PC-9 (cell line): ENCODE measurements at regions of chr19 and their contacts with region 1.

Region 1: GRCh38 chr19:35716801-35717666 is 769 bp upstream of the KMT2B start:
- DNase-seq: peak; percentile 83 to 89
- H3K4me3 ChIP-seq: peak overlapping the region; percentile 85
- H3K27ac ChIP-seq: peak overlapping the region; percentile 45
- H3K4me1 ChIP-seq: peaks cover 20% of the 10 kb centered on the region
- H3K27me3 ChIP-seq: no peaks in the 10 kb centered on the region
- CTCF ChIP-seq: peak; percentile 91

Region 2: DNA sequence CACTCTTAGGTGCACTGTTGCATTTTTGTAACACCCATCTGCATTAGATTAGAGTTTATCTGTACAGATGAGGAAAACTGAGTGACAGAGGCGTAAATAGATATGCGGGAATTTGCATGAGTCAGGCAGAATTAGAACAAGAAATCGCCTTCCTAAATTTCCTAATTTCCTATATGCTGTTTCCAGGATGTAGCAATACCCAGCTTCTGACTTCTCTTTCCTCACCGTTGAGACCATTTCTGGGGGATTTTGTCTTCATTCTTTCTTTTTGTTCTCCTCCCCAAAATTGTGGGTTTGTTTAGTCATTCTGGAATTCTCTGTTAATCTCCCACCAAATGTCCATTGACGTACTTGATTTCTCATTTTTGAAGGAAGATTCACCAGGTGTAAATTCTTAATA is 742.4 kb before region 1 on chr19:
- CTCF ChIA-PET with region 1: no interaction called
- POLR2A ChIA-PET with region 1: no interaction called
- intact Hi-C with region 1: loop called (anchors 2 kb)
- DNase-seq: no peak
- H3K4me3 ChIP-seq: no peak overlapping the region
- H3K27ac ChIP-seq: no peak overlapping the region
- H3K4me1 ChIP-seq: no peaks in the 10 kb centered on the region
- H3K27me3 ChIP-seq: peaks cover 44% of the 10 kb centered on the region
- CTCF ChIP-seq: no peak

Region 3: GRCh38 chr19:35269421-35270117 is 447.5 kb before region 1 on chr19:
- CTCF ChIA-PET with region 1: no interaction called
- POLR2A ChIA-PET with region 1: no interaction called
- intact Hi-C with region 1: loop called (anchors 1 kb)
- DNase-seq: peak; percentile 68 to 93
- H3K4me3 ChIP-seq: peak overlapping the region; percentile 66
- H3K27ac ChIP-seq: peak overlapping the region; percentile 47; the same call in 1 of the 2 replicates
- H3K4me1 ChIP-seq: peaks cover 14% of the 10 kb centered on the region; the same call in 1 of the 2 replicates
- H3K27me3 ChIP-seq: no peaks in the 10 kb centered on the region
- CTCF ChIP-seq: peak; percentile 70

Region 4: GRCh38 chr19:35352448-35353304 is 364.4 kb before region 1 on chr19:
- CTCF ChIA-PET with region 1: interaction called, 3 read pairs
- POLR2A ChIA-PET with region 1: no interaction called
- intact Hi-C with region 1: loop called (anchors 1 kb)
- DNase-seq: peak; percentile 66 to 71
- H3K4me3 ChIP-seq: no peak overlapping the region
- H3K27ac ChIP-seq: no peak overlapping the region
- H3K4me1 ChIP-seq: no peaks in the 10 kb centered on the region
- H3K27me3 ChIP-seq: no peaks in the 10 kb centered on the region
- CTCF ChIP-seq: peak; percentile 93

Region 5: GRCh38 chr19:35545001-35545911 is 171.8 kb before region 1 on chr19 and contains the start of gene TMEM147:
- CTCF ChIA-PET with region 1: no interaction called
- POLR2A ChIA-PET with region 1: no interaction called
- intact Hi-C with region 1: loop called (anchors 1 kb)
- DNase-seq: peak; percentile 66 to 90
- H3K4me3 ChIP-seq: peak within 1 kb of the TSS; percentile 100
- H3K27ac ChIP-seq: peak within 1 kb of the TSS; percentile 59
- H3K4me1 ChIP-seq: peaks cover 14% of the 10 kb centered on the region
- H3K27me3 ChIP-seq: no peaks in the 10 kb centered on the region
- CTCF ChIP-seq: no peak
- total RNA-seq, gene TMEM147: 82.6 and 95.9 TPM in 2 replicates

Region 6: DNA sequence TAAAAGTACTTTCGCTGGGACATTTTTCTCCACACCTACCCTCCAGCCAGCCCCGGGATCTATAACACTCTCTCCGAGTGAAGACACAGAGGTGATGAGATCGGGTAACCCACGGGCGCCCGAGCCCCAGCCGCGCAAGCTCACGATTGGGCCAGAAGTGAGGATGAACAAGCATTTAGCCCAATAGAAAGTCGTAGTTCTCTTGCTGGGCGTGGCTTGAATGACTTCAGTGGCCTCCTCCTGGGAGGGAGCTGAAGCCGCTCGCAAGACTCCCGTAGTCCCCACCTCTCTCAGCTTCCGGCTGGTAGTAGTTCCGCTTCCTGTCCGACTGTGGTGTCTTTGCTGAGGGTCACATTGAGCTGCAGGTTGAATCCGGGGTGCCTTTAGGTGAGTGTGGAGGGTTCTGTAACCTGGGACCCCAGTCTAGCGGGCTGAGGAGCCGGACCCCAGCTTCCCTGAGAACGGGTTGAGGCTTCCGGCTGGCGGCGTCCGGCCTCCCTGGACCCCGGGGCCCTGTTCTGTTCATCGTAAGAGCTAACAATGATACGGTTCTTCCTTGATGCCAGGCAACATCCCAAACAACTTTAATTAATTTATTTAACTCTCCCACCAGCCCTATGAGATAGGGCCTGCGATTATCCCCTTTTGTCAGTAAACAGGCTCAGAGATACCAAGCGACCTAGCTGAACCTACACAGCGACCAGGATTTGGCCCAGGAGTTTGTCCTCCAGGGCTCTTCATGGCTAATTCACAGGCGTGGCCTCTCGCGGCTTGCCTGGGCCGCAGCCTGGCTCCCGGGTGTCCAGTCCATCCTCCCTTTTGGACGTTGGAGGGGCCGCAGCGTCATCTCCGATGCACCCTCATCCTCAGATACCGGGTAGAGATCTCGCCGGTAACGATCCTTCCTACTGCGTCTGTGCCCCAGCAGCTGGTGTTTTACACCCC is 68.7 kb before region 1 on chr19 and contains the start of gene COX6B1:
- CTCF ChIA-PET with region 1: no interaction called
- POLR2A ChIA-PET with region 1: no interaction called
- intact Hi-C with region 1: loop called (anchors 1 kb)
- DNase-seq: peak; percentile 91 to 96
- H3K4me3 ChIP-seq: peak within 1 kb of the TSS; percentile 78
- H3K27ac ChIP-seq: peak within 1 kb of the TSS; percentile 2; the same call in 1 of the 2 replicates
- H3K4me1 ChIP-seq: peaks cover 11% of the 10 kb centered on the region; the same call in 1 of the 2 replicates
- H3K27me3 ChIP-seq: no peaks in the 10 kb centered on the region
- CTCF ChIP-seq: no peak
- total RNA-seq, gene COX6B1: 441 and 489 TPM in 2 replicates

Region 7: DNA sequence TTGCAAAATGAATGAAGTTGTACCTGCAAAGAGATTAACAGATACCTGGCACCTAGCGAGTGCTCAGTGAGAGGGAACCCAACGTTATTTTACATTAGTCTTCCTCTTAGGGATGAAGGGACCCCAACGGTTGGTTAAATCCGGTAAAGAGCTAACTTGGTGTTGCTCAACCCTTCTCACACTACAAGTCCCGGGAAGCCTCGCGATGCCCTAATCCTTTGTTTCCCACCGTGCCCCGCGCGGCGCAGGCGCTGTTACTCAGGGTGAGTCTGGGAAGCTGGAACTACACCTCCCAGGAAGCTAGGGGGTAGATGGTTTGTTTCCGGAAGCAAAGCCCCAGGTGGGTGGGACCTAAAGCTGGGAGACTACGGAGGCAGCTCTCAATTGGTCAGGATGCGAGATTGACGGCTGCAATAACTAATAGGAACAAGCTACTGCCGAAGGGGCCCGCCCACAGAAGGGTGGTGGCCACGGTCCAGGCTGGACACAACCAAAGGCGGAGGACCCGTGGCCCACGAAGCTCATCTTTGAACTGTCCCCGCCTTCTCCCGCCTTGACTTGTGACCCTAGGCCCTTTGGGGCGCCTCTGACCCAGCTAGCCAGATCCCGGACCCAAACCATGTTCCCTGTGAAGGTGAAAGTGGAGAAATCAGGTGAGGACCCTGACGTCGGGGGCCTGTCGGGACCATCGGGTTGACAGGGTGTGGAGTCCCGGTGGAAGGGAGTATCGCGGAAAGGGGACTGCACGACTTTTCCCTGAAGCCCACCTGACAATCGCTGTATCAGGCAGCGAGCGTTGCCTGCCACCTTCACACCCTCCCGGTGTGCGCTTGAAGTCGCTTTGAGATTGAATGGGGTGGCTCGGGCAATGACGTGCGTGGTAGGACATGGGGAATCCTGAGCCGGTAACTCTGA is 31.3 kb after region 1 on chr19 and contains the start of gene LIN37:
- CTCF ChIA-PET with region 1: no interaction called
- POLR2A ChIA-PET with region 1: no interaction called
- intact Hi-C with region 1: loop called (anchors 1 kb)
- DNase-seq: peak; percentile 98 to 99
- H3K4me3 ChIP-seq: peak within 1 kb of the TSS; percentile 97
- H3K27ac ChIP-seq: no peak within 1 kb of the TSS
- H3K4me1 ChIP-seq: peaks cover 36% of the 10 kb centered on the region
- H3K27me3 ChIP-seq: no peaks in the 10 kb centered on the region
- CTCF ChIP-seq: no peak
- total RNA-seq, gene LIN37: 9.4 and 17.0 TPM in 2 replicates